Cardiac septum (tissue), 1 donor: ENCODE measurements at regions of chr22 and their contacts with region 1.

Region 1: GRCh38 chr22:23823331-23823791 is 15.4 kb downstream of the DERL3 start:
- DNase-seq: no peak

Region 2: DNA sequence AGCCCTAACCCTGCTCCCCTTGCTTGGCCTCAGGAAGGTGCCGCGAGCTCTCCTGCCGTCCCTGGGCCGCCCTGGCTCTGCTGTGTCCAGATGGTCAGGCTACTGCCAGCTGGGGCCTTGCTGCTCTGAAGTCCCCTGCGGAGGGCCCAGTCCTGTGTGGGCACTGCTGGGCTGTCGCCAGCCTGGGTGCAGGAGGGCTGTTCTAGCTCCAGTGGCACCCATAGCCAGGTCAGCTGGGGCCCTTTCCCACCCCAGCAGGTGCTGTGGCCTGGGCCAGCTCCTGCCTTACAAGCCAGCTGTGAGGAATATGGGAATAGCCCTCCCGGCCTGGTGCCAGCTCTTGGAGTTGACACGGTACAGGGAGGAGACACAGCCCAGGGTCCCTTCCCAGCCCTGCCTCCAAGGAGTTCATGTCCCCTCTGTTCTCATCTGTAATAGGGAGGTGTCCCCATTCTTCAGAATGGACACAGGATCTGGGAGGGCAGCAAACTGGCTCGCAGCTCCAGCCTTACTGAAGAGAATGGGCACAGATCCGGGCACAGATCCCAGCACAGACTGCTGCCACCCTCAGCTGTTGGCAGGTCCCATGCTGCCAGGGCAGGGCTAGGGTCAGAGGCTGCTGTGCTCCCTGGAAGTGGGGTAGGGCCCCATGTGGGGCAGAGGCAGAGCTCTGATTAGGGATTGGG is 11.6 kb after region 1 on chr22:
- intact Hi-C with region 1: loop called (anchors 1 kb)
- DNase-seq: peak; percentile 85